Activated CD4-positive, alpha-beta T cell treated with anti-CD3 and anti-CD28 coated beads for 36 hours (primary cell): ENCODE measurements at regions of chr6 and their contacts with region 1.

Region 1: DNA sequence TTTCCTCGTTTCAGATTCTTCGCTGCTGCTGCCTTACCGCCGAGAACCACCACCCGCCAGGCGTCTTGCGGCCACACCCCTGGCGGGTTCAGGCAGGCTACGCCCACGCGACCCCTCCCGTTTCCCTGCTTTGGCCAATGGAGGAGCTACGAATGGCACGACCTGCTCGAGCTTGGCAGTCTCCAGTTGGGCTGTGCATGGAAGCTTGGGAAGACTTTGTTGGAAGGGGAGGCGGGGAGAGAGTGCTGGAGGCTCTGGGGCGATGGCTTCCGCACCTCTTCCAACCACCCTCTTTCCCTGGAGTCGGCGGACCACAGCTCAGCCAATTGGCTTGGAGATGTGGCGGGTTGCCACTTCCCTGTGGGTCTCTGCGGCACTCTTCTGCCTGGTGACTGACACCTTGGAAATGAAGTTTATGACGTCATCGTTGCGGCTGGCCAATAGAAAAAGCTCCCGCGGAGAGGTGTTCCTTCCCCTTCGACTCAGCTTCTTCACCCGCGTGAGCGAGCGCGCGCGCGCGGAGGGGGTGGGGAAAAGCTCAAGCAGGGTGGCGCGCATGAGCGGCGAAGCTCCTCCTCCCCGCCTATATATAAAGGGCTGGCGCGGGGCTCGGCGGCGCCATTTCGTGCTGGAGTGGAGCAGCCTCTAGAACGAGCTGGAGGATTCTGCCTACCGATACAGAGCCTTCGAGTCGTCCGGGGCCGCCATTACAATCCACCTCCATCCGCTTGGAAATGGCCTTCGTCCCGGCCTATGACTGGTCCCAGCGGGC is 3.4 kb downstream of the BRD2 start:
- DNase-seq: peak; percentile 100
- ATAC-seq: peak; percentile 43
- H3K4me3 Mint-ChIP-seq: peak overlapping the region; percentile 98
- H3K27ac Mint-ChIP-seq: peak overlapping the region; percentile 100
- H3K4me1 Mint-ChIP-seq: peaks cover 27% of the 10 kb centered on the region
- H3K27me3 Mint-ChIP-seq: no peaks in the 10 kb centered on the region

Region 2: DNA sequence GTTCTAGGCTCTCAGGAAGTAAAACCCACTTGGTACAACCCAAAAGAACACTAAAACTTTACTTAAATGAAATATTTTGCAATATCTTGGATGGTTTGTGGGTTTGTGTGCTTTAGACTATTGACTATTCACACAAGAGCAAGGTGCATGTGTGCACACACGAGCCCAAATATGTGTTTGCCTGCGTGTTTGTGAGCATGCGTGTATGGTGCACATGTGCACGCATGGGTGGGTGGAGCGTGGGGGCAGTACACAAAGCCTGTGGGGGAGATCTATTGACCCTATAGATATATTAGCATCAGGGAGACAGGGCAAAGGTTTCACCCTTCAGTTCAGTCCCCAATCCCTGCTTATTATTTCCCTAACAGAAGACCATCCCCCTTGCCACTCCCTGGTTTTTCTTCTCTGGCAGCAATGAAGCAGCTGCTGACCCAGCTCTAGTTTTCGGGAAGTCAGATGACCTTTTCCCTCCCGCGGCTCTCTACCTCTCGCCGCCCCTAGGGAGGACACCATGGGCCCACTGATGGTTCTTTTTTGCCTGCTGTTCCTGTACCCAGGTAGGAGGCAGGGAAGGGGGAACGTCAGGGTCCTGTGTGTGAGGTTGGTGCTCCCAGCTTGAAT is 1044.4 kb before region 1 on chr6 and contains the start of gene C2:
- CTCF ChIA-PET with region 1: no interaction called
- POLR2A ChIA-PET with region 1: no interaction called
- intact Hi-C with region 1: no loop called
- DNase-seq: no peak
- ATAC-seq: no peak
- H3K4me3 Mint-ChIP-seq: no peak within 1 kb of the TSS
- H3K27ac Mint-ChIP-seq: no peak within 1 kb of the TSS
- H3K4me1 Mint-ChIP-seq: no peaks in the 10 kb centered on the region
- H3K27me3 Mint-ChIP-seq: no peaks in the 10 kb centered on the region
- total RNA-seq, gene C2: 0.96 to 1.5 TPM

Region 3: GRCh38 chr6:32047850-32048766 is 923.7 kb before region 1 on chr6:
- CTCF ChIA-PET with region 1: no interaction called
- POLR2A ChIA-PET with region 1: no interaction called
- intact Hi-C with region 1: no loop called
- DNase-seq: peak; percentile 82
- ATAC-seq: peak; percentile 90
- H3K4me3 Mint-ChIP-seq: no peak overlapping the region
- H3K27ac Mint-ChIP-seq: no peak overlapping the region
- H3K4me1 Mint-ChIP-seq: peaks cover 3% of the 10 kb centered on the region
- H3K27me3 Mint-ChIP-seq: no peaks in the 10 kb centered on the region

Region 4: DNA sequence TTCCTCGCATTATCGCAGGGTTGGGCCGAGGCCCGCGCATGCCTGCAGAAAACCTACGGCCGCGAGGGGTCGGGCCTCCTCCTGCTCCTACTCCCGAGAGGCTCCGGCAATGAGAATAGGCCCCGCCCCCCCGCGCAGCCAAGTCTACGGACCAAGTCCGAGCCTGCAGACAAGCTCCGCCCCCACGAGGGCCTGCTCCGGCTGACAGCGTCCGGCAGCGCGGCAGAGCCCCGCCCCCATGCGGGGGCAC is 776.2 kb before region 1 on chr6:
- CTCF ChIA-PET with region 1: no interaction called
- POLR2A ChIA-PET with region 1: interaction called, 8 read pairs
- intact Hi-C with region 1: loop called (anchors 1 to 10 kb)
- DNase-seq: peak; percentile 100
- ATAC-seq: peak; percentile 90
- H3K4me3 Mint-ChIP-seq: peak overlapping the region; percentile 94
- H3K27ac Mint-ChIP-seq: peak overlapping the region; percentile 90
- H3K4me1 Mint-ChIP-seq: peaks cover 32% of the 10 kb centered on the region
- H3K27me3 Mint-ChIP-seq: no peaks in the 10 kb centered on the region

Region 5: DNA sequence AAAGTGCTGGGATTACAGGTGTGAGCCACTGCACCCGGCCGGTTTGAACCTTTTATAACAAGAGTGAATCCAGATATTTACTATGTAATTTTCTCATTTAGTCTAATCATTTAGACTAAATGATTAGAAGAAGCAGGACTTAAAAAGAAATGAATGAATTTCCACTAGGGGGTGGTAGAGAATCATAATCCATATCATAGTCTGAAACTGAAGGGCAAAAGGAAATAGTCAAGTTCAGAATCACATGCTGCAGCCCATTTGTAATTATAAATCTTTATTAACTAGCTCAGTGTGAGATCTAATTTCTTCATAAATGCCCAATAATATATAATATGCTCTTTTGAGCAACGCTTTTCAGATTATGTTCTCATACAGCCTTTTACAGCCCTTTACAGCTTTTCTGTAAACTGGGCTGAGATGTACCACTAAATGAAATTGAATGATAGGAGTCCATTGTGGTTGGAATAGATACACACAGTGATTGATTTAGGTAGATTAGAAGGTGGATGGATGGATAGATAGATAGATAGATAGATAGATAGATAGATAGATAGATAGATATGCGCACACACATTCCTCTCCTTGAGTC is 86.0 kb before region 1 on chr6:
- CTCF ChIA-PET with region 1: interaction called, 12 read pairs
- POLR2A ChIA-PET with region 1: interaction called, 3 read pairs
- intact Hi-C with region 1: loop called in 1 of 2 experiments (anchors 1 kb)
- DNase-seq: no peak
- ATAC-seq: peak; percentile 55
- H3K4me3 Mint-ChIP-seq: no peak overlapping the region
- H3K27ac Mint-ChIP-seq: no peak overlapping the region
- H3K4me1 Mint-ChIP-seq: peaks cover 10% of the 10 kb centered on the region
- H3K27me3 Mint-ChIP-seq: no peaks in the 10 kb centered on the region

Region 6: DNA sequence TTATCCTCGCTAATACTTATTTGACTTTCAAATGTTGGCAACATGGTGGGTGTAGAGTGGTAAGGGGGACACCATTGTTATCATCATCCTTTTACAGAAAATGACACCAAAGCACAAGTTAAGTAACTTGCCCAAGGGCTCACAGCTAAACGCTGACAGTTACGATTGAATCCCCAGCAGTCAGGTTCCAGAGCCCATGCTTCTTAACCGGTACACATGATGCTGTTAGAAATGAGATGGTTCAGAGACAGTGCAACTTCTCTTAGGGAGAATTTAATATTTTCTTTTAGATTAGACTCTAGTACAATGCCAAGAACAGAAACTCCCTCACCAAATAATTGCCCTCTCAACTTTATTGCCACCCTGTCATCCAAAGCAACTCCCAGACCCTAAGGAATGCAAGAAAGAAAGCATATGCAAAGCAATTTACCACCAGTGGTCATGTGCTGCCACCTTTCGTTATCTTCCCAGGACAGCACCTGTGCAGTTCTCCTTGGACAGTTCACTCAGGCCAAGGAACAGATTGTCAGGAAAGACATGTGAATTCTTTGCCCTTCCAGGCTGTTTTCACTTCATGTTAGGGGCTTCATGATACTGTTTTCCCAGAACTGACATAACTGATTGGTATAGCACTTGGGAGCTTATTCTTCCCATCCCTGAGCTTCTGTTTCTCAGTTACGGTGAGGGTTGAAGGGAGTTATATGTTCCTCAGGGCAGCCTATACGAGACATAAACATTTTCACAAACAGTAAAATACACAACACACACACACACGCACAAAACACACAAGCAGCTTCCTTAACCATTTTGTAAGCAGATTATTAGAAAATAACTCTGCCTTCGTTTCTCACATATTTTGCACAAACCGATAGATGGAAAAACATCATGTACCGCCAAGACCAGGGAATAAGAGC is 24.0 kb before region 1 on chr6:
- CTCF ChIA-PET with region 1: interaction called, 197 read pairs
- POLR2A ChIA-PET with region 1: interaction called, 83 read pairs
- intact Hi-C with region 1: loop called (anchors 1 to 2 kb)
- DNase-seq: peak; percentile 58
- ATAC-seq: no peak
- H3K4me3 Mint-ChIP-seq: no peak overlapping the region
- H3K27ac Mint-ChIP-seq: no peak overlapping the region
- H3K4me1 Mint-ChIP-seq: peaks cover 57% of the 10 kb centered on the region
- H3K27me3 Mint-ChIP-seq: no peaks in the 10 kb centered on the region

Region 7: DNA sequence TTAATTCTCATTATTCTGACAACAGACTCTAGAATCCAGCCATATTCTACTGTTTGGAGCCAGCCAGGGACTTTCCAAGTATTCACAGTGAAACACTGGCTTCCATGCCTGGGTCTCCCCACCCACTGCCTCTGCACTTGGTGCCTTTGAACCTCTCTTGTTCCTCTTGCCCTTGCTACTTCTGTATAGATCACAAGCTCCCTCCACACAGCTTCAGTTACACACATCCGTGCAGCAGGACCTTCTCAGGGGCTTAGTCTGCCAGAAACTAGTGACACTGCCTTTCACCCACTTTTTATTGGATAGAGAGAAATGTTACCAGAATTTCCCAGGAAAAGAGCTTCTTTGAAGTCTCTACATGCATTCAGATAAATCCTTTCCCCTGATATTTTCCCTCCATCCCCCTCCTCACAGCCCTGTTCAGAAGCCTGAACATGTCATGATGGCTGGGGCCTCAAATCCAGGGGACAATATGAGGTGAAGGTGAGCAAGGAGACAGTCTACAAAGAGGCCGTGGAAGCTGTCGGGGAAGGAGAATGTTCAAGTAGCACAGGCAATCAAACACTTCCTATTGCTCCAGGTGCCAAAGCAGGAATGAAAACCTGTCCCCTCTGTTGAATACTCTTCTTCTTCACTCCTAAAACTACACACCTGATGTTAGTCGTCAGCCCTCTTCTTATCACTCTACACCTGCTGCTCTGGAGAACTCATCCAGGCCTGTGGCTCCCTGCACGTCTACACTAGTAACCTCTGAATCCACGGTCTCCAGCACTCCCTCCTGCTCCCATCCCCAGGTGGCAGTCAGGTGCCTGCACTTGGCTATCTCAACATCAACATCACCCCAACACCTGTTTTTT is 57.8 kb after region 1 on chr6:
- CTCF ChIA-PET with region 1: no interaction called
- POLR2A ChIA-PET with region 1: no interaction called
- intact Hi-C with region 1: no loop called
- DNase-seq: peak; percentile 43
- ATAC-seq: peak; percentile 87
- H3K4me3 Mint-ChIP-seq: no peak overlapping the region
- H3K27ac Mint-ChIP-seq: peak overlapping the region; percentile 2
- H3K4me1 Mint-ChIP-seq: peaks cover 10% of the 10 kb centered on the region
- H3K27me3 Mint-ChIP-seq: peaks cover 4% of the 10 kb centered on the region

Region 8: GRCh38 chr6:33271458-33272274 is 299.9 kb after region 1 on chr6 and contains the starts of genes RPS18 and VPS52:
- CTCF ChIA-PET with region 1: interaction called, 5 read pairs
- POLR2A ChIA-PET with region 1: interaction called, 4 read pairs
- intact Hi-C with region 1: loop called (anchors 1 to 2 kb)
- DNase-seq: peak; percentile 94
- ATAC-seq: peak; percentile 92
- H3K4me3 Mint-ChIP-seq: peak within 1 kb of the TSS; percentile 91
- H3K27ac Mint-ChIP-seq: peak within 1 kb of the TSS; percentile 100
- H3K4me1 Mint-ChIP-seq: peaks cover 47% of the 10 kb centered on the region
- H3K27me3 Mint-ChIP-seq: no peaks in the 10 kb centered on the region
- total RNA-seq, gene RPS18: 2,706 to 4,631 TPM
- total RNA-seq, gene VPS52: 35.6 to 45.2 TPM

Region 9: DNA sequence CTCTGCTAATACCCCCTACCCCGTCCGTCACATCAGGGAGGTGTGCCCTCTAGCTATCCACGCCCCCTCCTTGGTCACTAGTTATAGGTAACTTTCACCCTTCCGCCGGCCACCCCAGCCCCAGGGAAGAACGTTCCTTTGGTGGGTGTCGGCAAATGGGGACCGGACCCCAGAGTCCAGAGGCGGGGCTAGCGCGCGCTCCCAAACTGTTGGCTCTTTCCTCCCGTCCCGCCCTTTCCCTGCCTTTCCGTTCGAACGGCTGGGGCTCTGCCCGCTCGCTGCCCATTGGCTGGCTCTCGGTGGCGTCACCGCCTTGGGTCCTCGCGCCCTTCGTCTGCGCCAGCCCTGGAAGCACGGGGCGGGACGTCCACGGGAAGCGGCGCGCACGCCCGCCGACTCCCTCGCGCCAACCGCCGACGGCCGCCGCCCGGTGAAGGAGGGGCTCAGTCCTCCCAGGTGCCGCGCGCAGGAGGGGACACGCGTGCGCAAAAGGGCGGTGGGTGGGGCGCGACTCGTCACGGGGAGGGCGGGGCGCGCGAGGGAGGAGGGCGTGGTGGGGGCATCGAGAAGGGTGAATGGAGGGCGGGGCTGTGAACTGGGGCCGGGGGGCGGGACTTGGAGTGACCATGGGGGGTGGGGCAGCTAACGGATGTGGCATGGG is 438.4 kb after region 1 on chr6:
- CTCF ChIA-PET with region 1: no interaction called
- POLR2A ChIA-PET with region 1: no interaction called
- intact Hi-C with region 1: loop called in 1 of 2 experiments (anchors 1 kb)
- DNase-seq: peak; percentile 98
- ATAC-seq: peak; percentile 88
- H3K4me3 Mint-ChIP-seq: peak overlapping the region; percentile 80
- H3K27ac Mint-ChIP-seq: peak overlapping the region; percentile 96
- H3K4me1 Mint-ChIP-seq: peaks cover 31% of the 10 kb centered on the region
- H3K27me3 Mint-ChIP-seq: no peaks in the 10 kb centered on the region